ENCODE measurements at regions of chr1 and their contacts with region 1.

Region 1: DNA sequence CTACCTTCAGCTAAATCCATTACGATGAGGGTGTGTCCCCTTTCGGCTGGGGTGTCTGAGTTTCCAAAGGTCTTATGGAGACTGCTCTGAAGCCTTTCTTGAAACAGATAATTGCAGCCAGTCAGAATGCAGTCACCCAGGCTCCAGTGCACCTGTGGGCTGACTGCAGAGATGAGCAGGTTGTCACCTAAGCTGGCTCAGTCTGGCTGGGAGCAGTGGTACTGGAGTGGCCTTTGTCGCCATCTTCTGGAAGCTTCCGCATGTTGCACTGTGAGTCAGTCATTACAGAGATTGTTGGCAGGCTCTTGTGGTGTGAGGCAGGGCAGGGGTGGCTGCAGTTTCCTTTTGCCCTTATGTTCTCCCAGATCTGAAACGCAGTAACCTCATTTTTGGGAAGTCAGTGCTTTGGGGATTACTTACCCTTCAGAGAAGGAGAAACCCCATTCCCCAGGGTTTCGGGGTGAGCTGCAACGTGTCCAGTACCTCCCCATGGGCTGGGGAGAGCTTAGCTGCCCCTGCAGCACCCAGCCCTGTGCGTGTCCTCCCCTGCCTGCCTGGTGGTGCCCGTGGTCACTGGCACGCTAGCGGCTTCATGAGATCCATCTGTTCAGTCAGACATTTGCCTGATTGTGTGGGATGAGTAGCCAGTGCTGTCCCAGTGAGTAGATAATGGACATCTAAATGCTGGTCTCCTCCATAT is 48.0 kb downstream of the SMYD2 start:
- DNase-seq: peak; percentile 80
- H3K4me3 ChIP-seq: no peak overlapping the region
- H3K27ac ChIP-seq: no peak overlapping the region
- H3K4me1 ChIP-seq: peaks cover 6% of the 10 kb centered on the region
- H3K27me3 ChIP-seq: no peaks in the 10 kb centered on the region
- CTCF ChIP-seq: peak; percentile 93

Region 2: GRCh38 chr1:213286235-213286634 is 1042.7 kb before region 1 on chr1:
- CTCF ChIA-PET with region 1: no interaction called
- POLR2A ChIA-PET with region 1: no interaction called
- intact Hi-C with region 1: no loop called
- DNase-seq: no peak
- H3K4me3 ChIP-seq: no peak overlapping the region
- H3K27ac ChIP-seq: no peak overlapping the region
- H3K4me1 ChIP-seq: no peaks in the 10 kb centered on the region
- H3K27me3 ChIP-seq: no peaks in the 10 kb centered on the region
- CTCF ChIP-seq: no peak; the same call in 1 of the 2 replicates

Region 3: GRCh38 chr1:213374369-213374768 is 954.6 kb before region 1 on chr1:
- CTCF ChIA-PET with region 1: no interaction called
- POLR2A ChIA-PET with region 1: no interaction called
- intact Hi-C with region 1: loop called (anchors 5 kb)
- DNase-seq: peak; percentile 73
- H3K4me3 ChIP-seq: no peak overlapping the region
- H3K27ac ChIP-seq: no peak overlapping the region
- H3K4me1 ChIP-seq: no peaks in the 10 kb centered on the region
- H3K27me3 ChIP-seq: no peaks in the 10 kb centered on the region
- CTCF ChIP-seq: peak; percentile 95

Region 4: GRCh38 chr1:213858581-213858980 is 470.3 kb before region 1 on chr1:
- CTCF ChIA-PET with region 1: no interaction called
- POLR2A ChIA-PET with region 1: no interaction called
- intact Hi-C with region 1: no loop called
- DNase-seq: no peak
- H3K4me3 ChIP-seq: no peak overlapping the region
- H3K27ac ChIP-seq: no peak overlapping the region
- H3K4me1 ChIP-seq: no peaks in the 10 kb centered on the region
- H3K27me3 ChIP-seq: peaks cover 72% of the 10 kb centered on the region
- CTCF ChIP-seq: no peak

Region 5: GRCh38 chr1:214213136-214213535 is 115.8 kb before region 1 on chr1:
- CTCF ChIA-PET with region 1: interaction called, 38 read pairs
- POLR2A ChIA-PET with region 1: no interaction called
- intact Hi-C with region 1: loop called (anchors 1 kb)
- DNase-seq: no peak
- H3K4me3 ChIP-seq: no peak overlapping the region
- H3K27ac ChIP-seq: no peak overlapping the region
- H3K4me1 ChIP-seq: no peaks in the 10 kb centered on the region
- H3K27me3 ChIP-seq: peaks cover 13% of the 10 kb centered on the region
- CTCF ChIP-seq: no peak

Region 6: DNA sequence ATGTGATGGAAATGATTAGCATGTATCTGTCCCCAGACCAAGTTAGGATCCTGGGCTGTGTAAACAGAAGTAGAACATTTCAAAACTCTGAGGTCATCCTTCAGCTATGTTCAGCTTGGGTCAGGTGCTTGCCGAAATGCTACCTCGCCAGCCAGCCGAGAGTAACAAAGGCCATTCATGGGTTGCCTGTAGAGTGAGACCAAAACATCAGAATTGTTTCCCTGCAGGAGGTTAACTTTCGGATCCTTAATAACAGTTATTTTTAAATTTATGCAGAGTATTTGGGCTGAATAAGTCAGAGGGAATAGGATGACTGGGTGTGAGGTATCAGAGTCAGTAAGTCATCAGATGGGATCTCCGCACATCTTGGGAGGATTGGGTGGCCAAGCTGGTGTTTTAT is 12.3 kb before region 1 on chr1:
- CTCF ChIA-PET with region 1: interaction called, 10 read pairs
- POLR2A ChIA-PET with region 1: no interaction called
- intact Hi-C with region 1: no loop called
- DNase-seq: no peak
- H3K4me3 ChIP-seq: no peak overlapping the region
- H3K27ac ChIP-seq: no peak overlapping the region
- H3K4me1 ChIP-seq: peaks cover 6% of the 10 kb centered on the region
- H3K27me3 ChIP-seq: no peaks in the 10 kb centered on the region
- CTCF ChIP-seq: no peak

Region 7: GRCh38 chr1:214602764-214603657 is 274.1 kb after region 1 on chr1 and contains the start of gene CENPF:
- CTCF ChIA-PET with region 1: interaction called, 6 read pairs
- POLR2A ChIA-PET with region 1: no interaction called
- intact Hi-C with region 1: loop called (anchors 5 kb)
- DNase-seq: peak; percentile 100
- H3K4me3 ChIP-seq: peak within 1 kb of the TSS; percentile 76
- H3K27ac ChIP-seq: peak within 1 kb of the TSS; percentile 87
- H3K4me1 ChIP-seq: peaks cover 17% of the 10 kb centered on the region
- H3K27me3 ChIP-seq: no peaks in the 10 kb centered on the region
- CTCF ChIP-seq: peak; percentile 32; the same call in 1 of the 2 replicates
- total RNA-seq, gene CENPF: 273 and 281 TPM in 2 replicates

Region 8: GRCh38 chr1:214637722-214638458 is 309.0 kb after region 1 on chr1:
- CTCF ChIA-PET with region 1: interaction called, 4 read pairs
- POLR2A ChIA-PET with region 1: no interaction called
- intact Hi-C with region 1: loop called (anchors 1 kb)
- DNase-seq: peak; percentile 65
- H3K4me3 ChIP-seq: no peak overlapping the region
- H3K27ac ChIP-seq: no peak overlapping the region
- H3K4me1 ChIP-seq: no peaks in the 10 kb centered on the region
- H3K27me3 ChIP-seq: no peaks in the 10 kb centered on the region
- CTCF ChIP-seq: peak; percentile 74

Region 9: GRCh38 chr1:214700365-214700764 is 371.4 kb after region 1 on chr1:
- CTCF ChIA-PET with region 1: no interaction called
- POLR2A ChIA-PET with region 1: no interaction called
- intact Hi-C with region 1: no loop called
- DNase-seq: no peak
- H3K4me3 ChIP-seq: no peak overlapping the region
- H3K27ac ChIP-seq: no peak overlapping the region
- H3K4me1 ChIP-seq: no peaks in the 10 kb centered on the region
- H3K27me3 ChIP-seq: no peaks in the 10 kb centered on the region
- CTCF ChIP-seq: no peak

Measured in A673 (cell line).